RWPE1 (cell line): ENCODE measurements at regions of chr14 and their contacts with region 1.

Region 1: DNA sequence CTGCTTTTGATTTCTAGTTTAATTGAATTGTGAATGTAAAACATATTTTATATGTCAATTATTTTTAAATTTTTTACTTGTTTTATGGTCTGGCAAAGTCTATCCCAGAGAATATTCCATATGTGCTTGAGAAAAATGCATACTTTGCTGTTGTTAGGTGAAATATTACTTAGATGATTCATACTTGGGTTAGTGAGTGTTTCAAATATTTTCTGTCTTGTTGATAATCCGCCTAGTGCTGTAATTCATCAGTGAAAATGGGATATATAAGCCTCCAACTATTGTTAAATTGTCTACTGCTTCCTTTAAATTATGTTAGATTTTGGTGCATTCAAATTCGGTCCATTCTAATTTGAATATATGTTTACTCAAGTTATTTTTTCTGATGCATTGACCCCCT is 395.5 kb downstream of the LRFN5 start:
- DNase-seq: no peak
- H3K27ac ChIP-seq: no peak overlapping the region
- CTCF ChIP-seq: no peak

Region 2: GRCh38 chr14:40986655-40987054 is 1015.5 kb before region 1 on chr14:
- CTCF ChIA-PET with region 1: interaction called, 10 read pairs
- POLR2A ChIA-PET with region 1: no interaction called
- DNase-seq: no peak
- H3K27ac ChIP-seq: no peak overlapping the region
- CTCF ChIP-seq: no peak